ENCODE measurements at regions of chr1 and their contacts with region 1.

Region 1: DNA sequence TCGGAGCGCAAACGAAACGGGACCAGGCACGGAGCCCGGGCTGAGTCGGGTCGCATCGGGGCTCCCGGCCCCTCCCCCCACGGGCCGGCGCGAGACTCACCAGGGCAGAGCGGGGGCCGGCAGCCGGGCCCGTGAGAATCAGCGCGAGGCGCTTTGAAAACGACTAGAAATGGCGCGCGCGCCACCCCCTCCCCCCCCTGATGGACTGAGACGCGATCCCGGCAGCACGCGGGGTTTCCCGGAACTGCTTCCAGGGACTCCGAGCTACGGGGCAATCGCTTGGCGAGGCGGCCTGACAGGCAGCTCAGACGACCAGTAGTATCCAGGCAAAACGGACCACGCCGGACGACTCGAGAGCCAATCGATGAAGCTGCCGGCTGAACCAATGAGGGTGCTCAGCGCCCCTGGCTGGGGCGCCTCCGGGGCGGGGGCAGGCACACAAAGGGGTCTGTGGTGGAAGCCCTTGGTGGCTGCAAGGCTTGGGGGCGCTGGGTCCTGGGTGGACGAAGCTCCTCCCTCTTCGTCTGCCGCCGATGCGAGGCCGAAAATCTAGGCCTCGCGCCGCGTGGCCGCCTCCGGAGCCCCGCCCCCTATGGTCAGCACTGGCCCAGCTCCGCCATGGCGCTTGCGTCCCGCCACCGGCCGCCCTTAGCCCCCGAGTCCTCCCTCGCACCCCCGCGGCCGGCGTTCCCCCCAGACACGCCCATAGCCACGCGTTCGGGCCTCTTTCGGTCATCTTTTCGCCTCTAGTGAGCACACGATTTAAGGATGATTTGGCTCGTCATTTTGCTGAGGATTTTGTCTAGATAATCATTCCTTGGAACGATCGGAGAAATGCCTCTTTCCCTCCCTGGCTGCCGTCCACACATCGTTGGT is at the start of gene HNRNPR:
- DNase-seq: peak; percentile 100
- H3K4me3 ChIP-seq: peak within 1 kb of the TSS; percentile 73 to 99 (median 99)
- H3K27ac ChIP-seq: peak within 1 kb of the TSS; percentile 79
- H3K4me1 ChIP-seq: peaks cover 27% of the 10 kb centered on the region
- H3K27me3 ChIP-seq: no peaks in the 10 kb centered on the region
- CTCF ChIP-seq: no peak
- POLR2A ChIP-seq: peak; percentile 87
- total RNA-seq, gene HNRNPR: 165 and 171 TPM in 2 replicates

Region 2: DNA sequence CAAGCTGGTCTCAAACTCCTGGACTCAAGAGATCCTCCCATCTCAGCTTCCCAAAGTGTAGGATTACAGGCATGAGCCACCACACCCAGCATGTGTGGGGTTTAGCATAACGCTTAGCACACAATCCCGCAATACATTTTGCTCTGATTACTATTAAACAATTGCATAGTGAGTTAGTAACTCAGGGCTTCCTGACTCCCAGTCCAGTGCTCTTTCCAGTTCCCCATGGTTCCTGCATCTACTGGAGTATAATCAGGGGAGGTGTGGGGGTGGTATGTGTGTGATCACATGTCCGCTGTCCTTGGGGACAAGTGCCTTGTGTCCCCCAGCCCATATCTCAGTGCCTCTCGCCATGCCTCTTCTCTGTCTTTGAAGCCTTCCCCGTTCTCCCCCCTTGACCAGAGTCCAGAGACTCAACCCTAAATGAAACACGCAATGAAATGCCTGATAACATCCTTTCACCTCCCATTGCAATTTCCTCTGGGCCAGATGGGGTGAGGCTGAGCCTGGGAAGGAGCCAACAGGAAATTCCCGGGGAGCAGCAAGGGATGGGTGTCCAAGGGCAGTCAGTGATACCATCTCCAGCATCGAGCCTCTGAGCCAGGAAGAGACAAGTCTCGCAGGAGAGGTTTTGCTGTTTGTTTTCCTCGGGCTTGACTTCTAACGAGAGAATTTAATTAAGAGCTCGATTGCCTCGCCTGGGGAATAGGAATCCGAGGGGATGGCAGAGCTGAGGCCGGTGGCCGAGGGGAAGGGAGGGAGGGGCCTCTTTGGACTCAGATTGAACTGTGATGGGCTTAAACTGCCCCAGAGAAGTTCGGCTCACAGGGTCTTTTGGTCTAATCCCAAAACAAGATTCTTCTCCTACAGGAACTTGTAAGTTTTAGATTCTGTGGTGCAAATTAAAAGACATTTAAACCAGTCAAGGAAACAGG is 119.4 kb before region 1 on chr1:
- CTCF ChIA-PET with region 1: no interaction called
- POLR2A ChIA-PET with region 1: no interaction called
- dilution Hi-C with region 1: no loop called
- intact Hi-C with region 1: loop called (anchors 5 kb)
- DNase-seq: peak; percentile 78
- H3K4me3 ChIP-seq: no peak overlapping the region
- H3K27ac ChIP-seq: peak overlapping the region; percentile 46
- H3K4me1 ChIP-seq: peaks cover 17% of the 10 kb centered on the region
- H3K27me3 ChIP-seq: no peaks in the 10 kb centered on the region
- CTCF ChIP-seq: no peak
- POLR2A ChIP-seq: no peak

Region 3: DNA sequence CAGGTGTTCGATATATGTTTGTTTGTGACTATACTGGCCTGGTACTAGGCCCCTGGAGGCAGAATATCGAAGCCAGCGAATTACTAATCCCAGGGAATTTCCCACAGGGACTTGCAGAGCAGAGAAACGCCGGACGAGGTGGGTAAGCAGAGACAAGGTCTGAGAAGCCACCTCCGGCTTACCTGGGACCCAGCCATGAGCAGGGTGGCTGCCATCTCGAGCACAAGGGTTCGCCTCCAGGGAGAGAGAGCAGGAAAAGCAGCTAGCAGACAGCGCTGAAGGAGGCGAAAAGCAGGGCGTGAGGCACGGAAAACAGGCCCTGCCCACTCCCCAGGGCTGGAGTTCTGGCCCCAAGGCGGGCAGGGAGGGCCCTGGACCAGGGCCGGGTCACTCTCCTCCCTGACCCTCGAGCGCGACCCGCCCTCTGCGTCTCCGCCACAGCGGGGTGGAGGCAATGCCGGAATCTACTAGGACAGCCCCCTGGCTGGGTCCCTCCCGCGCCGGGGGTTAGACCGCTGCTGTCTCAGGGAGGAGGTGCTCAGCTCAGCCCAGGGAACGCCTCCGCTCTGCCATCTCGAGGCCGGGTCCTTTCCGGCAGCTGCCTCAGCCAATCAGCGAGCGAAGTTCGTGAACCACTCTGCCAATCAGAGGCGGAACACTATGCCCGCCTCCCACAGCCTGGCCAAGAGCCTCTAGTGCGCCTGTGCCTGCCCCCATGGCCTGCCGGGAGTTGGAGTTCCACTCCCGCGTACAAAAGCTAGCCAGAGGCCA is 23.6 kb after region 1 on chr1:
- CTCF ChIA-PET with region 1: interaction called, 15 read pairs
- POLR2A ChIA-PET with region 1: interaction called, 28 read pairs
- dilution Hi-C with region 1: no loop called
- intact Hi-C with region 1: loop called (anchors 1 kb)
- DNase-seq: peak; percentile 99
- H3K4me3 ChIP-seq: peak overlapping the region; percentile 47 to 93 (median 70)
- H3K27ac ChIP-seq: peak overlapping the region; percentile 82
- H3K4me1 ChIP-seq: peaks cover 32% of the 10 kb centered on the region
- H3K27me3 ChIP-seq: no peaks in the 10 kb centered on the region
- CTCF ChIP-seq: no peak
- POLR2A ChIP-seq: no peak

Measured in endothelial cell of umbilical vein (primary cell).